ENCODE measurements at regions of chr2 and their contacts with region 1.

Region 1: DNA sequence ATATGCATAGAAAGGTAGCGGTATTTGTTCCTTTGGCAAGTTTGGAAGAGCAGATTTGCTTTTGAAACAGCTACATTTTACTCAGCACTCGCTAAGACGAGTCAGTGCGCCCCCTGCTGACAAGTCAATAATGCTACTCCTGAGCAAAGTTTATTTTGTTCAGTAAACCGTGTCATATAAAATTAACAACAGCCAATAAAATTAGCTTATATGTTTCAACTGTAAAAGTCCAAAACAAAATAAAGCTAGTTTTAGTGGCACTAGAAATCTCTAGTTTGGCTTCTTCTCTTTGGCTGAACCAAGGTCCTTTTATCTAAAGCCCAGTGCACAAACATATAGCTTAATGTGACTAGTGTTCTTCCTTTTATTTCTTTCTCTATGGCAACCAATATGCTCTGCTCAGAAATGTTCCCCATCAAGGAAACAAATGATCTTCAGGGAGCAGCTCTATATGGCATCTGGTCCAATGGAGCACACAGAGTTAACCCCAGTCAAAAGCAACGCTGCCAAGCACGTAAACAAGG is 4.2 kb upstream of the POU3F3 start:
- DNase-seq: peak; percentile 73
- H3K4me3 Mint-ChIP-seq: no peak overlapping the region
- H3K27ac Mint-ChIP-seq: no peak overlapping the region
- H3K4me1 Mint-ChIP-seq: peaks cover 26% of the 10 kb centered on the region
- H3K27me3 Mint-ChIP-seq: peaks cover 92% of the 10 kb centered on the region
- CTCF ChIP-seq: peak; percentile 86

Region 2: GRCh38 chr2:104033399-104033798 is 816.3 kb before region 1 on chr2:
- CTCF ChIA-PET with region 1: interaction called, 9 read pairs
- POLR2A ChIA-PET with region 1: no interaction called
- intact Hi-C with region 1: loop called (anchors 1 kb)
- DNase-seq: peak; percentile 30
- H3K4me3 Mint-ChIP-seq: no peak overlapping the region
- H3K27ac Mint-ChIP-seq: no peak overlapping the region
- H3K4me1 Mint-ChIP-seq: no peaks in the 10 kb centered on the region
- H3K27me3 Mint-ChIP-seq: peaks cover 86% of the 10 kb centered on the region
- CTCF ChIP-seq: peak; percentile 28

Region 3: DNA sequence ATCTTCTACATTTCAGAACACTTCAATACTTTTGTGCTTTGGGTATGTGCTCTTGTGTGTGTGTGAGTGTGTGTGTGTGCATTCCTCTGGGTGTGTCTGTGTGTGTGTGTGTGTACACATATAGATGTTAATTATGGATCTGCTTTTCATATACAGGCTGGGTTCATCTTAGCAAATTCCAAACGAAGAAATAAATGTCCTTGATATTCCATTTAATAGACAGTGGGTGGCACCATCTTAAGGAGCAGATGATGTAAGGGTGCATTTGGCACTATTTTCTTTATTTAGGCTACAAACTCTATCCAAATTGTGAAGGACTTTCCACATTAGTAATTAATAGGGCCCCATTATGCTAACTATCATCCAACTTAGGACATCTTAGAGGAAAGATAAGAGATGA is 421.5 kb before region 1 on chr2:
- CTCF ChIA-PET with region 1: interaction called, 26 read pairs
- POLR2A ChIA-PET with region 1: no interaction called
- intact Hi-C with region 1: loop called (anchors 1 kb)
- DNase-seq: no peak
- H3K4me3 Mint-ChIP-seq: no peak overlapping the region
- H3K27ac Mint-ChIP-seq: no peak overlapping the region
- H3K4me1 Mint-ChIP-seq: peaks cover 6% of the 10 kb centered on the region
- H3K27me3 Mint-ChIP-seq: peaks cover 68% of the 10 kb centered on the region
- CTCF ChIP-seq: no peak

Region 4: GRCh38 chr2:104537116-104537515 is 312.6 kb before region 1 on chr2:
- CTCF ChIA-PET with region 1: interaction called, 11 read pairs
- POLR2A ChIA-PET with region 1: no interaction called
- intact Hi-C with region 1: no loop called
- DNase-seq: no peak
- H3K4me3 Mint-ChIP-seq: no peak overlapping the region
- H3K27ac Mint-ChIP-seq: no peak overlapping the region
- H3K4me1 Mint-ChIP-seq: no peaks in the 10 kb centered on the region
- H3K27me3 Mint-ChIP-seq: peaks cover 83% of the 10 kb centered on the region
- CTCF ChIP-seq: no peak

Region 5: DNA sequence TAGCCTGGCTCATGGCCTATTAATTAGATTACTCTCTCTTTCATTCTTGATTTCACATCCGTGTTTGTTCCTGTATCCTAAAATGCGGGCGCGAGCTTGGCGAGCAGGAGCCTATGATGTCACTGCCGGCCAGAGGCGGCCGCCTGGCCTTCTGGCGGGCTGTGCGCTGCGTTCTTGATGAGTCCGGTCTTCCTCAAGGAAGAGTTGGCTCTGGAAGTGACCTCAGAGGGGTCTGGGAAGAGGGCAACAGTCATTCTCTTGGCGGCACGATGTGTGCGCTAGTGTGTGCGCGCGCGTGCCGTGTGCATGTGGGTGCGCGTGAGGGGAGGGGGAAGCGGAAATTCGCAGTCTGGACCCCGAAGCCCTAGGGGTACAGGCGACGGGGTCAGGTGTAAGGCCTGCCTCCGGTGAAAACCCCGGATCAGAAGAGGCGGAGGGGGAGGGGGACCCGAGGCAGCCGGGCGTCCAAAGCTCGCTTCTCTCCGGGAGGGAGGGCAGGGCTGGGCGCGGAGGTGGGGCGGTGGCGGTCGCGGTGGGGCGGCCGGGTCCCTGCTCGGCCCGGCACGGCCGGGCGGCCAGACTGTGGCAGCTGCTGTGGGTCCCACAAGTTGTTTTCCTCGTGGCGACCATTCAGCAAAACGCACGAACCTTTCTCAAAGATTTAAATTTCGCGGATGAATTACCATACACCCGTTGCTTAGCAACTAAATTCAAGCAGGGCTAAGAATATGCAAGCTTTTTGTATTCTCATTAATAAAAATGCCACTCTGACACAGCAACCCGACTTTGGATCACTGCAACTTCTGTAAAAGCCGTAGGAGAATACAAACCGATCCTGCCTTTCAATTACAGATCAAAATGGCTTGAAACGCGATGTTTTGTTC is 12.6 kb after region 1 on chr2:
- CTCF ChIA-PET with region 1: interaction called, 17 read pairs
- POLR2A ChIA-PET with region 1: no interaction called
- intact Hi-C with region 1: no loop called
- DNase-seq: no peak
- H3K4me3 Mint-ChIP-seq: no peak overlapping the region
- H3K27ac Mint-ChIP-seq: no peak overlapping the region
- H3K4me1 Mint-ChIP-seq: no peaks in the 10 kb centered on the region
- H3K27me3 Mint-ChIP-seq: peaks cover 23% of the 10 kb centered on the region
- CTCF ChIP-seq: no peak

Region 6: DNA sequence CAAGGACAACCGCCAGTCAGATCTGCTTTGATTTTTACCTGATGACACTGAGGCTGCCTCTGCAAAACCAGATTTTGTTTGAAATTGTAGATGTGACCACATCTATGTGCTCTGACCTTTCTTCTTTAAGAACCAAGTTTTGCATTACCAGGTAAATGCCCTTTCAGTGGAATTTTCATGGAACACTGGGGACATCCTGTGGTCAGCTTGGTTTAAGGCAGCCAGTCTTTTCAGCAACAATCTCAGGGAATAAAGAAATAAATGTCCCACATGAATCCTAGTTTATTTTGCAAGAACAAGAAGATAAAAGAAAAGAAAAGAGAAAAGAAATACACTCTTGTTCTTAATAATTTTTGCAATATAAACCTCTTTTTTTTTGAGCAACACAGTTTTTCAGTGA is 94.8 kb after region 1 on chr2:
- CTCF ChIA-PET with region 1: interaction called, 21 read pairs
- POLR2A ChIA-PET with region 1: no interaction called
- intact Hi-C with region 1: loop called (anchors 1 kb)
- DNase-seq: peak; percentile 66
- H3K4me3 Mint-ChIP-seq: no peak overlapping the region
- H3K27ac Mint-ChIP-seq: no peak overlapping the region
- H3K4me1 Mint-ChIP-seq: peaks cover 6% of the 10 kb centered on the region
- H3K27me3 Mint-ChIP-seq: no peaks in the 10 kb centered on the region
- CTCF ChIP-seq: peak; percentile 62

Measured in MCF 10A (cell line).